PC-3 (cell line): ENCODE measurements at regions of chr1 and their contacts with region 1.

Region 1: DNA sequence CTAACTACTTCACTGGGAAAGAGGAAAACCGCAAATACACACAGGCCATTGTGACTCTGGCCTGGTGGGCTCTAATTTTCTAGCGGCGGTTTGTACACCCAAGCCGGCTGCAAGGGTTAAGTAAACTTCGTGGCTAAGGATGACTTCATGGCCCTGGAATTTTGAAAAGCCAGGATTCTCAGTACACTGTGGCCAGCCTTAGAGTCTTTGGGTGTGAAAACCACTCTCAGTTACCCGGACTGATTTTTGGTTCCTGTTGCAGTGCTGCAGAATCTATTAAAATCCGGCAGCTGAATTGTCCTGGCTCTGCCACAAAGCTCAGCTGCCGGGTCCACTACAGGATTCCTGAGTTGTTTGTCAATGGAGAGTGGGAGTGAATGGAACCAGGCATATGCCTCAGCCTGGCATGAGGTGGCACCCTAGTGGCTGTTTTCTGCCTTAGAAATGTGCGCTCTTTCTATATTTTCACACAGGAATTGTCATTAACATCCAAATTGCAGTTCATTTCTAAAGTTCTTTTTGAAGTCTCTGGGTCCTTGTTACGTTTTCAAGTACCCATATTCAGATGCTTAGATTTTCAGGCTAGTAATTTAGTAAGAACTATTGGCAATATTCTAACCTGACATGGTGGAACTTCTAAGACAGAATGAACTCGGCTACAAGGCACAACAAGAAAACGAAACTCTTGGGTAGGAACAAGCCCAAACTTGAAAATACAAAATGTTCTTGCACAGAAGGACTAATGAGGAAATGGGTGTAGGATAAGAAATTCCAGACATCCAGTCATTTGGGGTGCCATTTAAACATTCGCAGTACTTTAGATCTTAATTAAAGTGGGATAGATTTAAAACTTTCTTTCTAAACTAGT is 255.9 kb downstream of the NFIA start:
- DNase-seq: peak; percentile 96
- ATAC-seq: peak; percentile 96
- H3K4me3 ChIP-seq: peak overlapping the region; percentile 66
- H3K27ac ChIP-seq: peak overlapping the region; percentile 67
- H3K4me1 ChIP-seq: peaks cover 27% of the 10 kb centered on the region
- H3K27me3 ChIP-seq: no peaks in the 10 kb centered on the region
- CTCF ChIP-seq: peak; percentile 93

Region 2: GRCh38 chr1:60978421-60979357 is 359.5 kb before region 1 on chr1:
- CTCF ChIA-PET with region 1: interaction called, 5 read pairs
- POLR2A ChIA-PET with region 1: no interaction called
- intact Hi-C with region 1: loop called (anchors 1 kb)
- DNase-seq: peak; percentile 64
- ATAC-seq: peak; percentile 94
- H3K4me3 ChIP-seq: no peak overlapping the region
- H3K27ac ChIP-seq: no peak overlapping the region
- H3K4me1 ChIP-seq: no peaks in the 10 kb centered on the region
- H3K27me3 ChIP-seq: no peaks in the 10 kb centered on the region
- CTCF ChIP-seq: peak; percentile 93

Region 3: GRCh38 chr1:61132176-61133001 is 205.8 kb before region 1 on chr1:
- CTCF ChIA-PET with region 1: no interaction called
- POLR2A ChIA-PET with region 1: no interaction called
- intact Hi-C with region 1: loop called (anchors 1 kb)
- DNase-seq: no peak
- ATAC-seq: no peak; the same call in 1 of the 2 replicates
- H3K4me3 ChIP-seq: no peak overlapping the region
- H3K27ac ChIP-seq: peak overlapping the region; percentile 48
- H3K4me1 ChIP-seq: peaks cover 14% of the 10 kb centered on the region
- H3K27me3 ChIP-seq: no peaks in the 10 kb centered on the region
- CTCF ChIP-seq: no peak

Region 4: DNA sequence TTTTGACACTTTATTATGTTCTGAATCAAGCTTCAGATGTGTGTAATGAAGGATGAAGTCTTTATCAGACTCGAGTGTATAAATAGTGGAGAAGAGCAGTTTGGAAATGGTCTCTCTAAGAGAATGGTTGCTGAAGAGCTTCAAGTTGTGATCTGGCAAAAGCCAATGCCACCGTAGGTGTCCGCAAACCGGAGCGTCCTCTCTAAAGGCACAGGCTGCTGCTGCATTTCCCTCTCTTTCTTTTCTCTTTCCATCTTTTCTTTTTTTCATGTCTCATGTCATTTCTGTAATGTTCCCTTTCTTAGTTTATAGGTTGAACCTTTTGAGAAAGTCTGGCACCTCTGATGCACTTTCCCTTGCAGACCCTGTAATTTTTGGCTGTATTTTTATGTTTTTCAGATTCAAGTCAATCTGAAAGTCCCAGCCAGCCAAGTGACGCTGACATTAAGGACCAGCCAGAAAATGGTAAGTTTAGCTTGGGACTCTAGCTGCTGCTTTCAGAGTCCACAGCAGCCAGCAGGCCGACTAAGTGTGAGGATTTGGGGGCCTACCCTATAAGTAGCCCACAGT is 61.0 kb before region 1 on chr1:
- CTCF ChIA-PET with region 1: no interaction called
- POLR2A ChIA-PET with region 1: no interaction called
- intact Hi-C with region 1: no loop called
- DNase-seq: no peak
- ATAC-seq: no peak
- H3K4me3 ChIP-seq: no peak overlapping the region
- H3K27ac ChIP-seq: no peak overlapping the region
- H3K4me1 ChIP-seq: no peaks in the 10 kb centered on the region
- H3K27me3 ChIP-seq: no peaks in the 10 kb centered on the region
- CTCF ChIP-seq: no peak

Region 5: DNA sequence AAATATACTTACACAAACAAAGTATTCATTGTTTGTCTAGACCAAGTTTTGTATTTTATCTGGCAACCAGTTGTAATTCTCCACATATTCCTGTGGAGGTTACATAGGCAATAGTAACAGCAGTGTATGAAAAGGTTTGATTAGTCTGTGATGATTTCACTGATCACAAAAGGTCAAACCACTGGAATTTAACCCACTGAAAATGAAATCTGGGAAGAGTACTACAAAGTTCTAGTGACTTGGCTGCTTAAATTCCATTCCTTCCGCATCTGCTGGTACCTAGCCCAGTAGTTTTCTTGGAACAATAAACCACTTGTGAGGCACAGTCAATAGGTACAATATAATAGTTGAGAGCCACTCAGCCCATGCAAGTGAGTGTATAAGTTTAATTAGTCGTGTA is 50.5 kb before region 1 on chr1:
- CTCF ChIA-PET with region 1: no interaction called
- POLR2A ChIA-PET with region 1: no interaction called
- intact Hi-C with region 1: loop called (anchors 2 kb)
- DNase-seq: peak; percentile 95
- ATAC-seq: peak; percentile 84
- H3K4me3 ChIP-seq: no peak overlapping the region
- H3K27ac ChIP-seq: peak overlapping the region; percentile 90
- H3K4me1 ChIP-seq: peaks cover 37% of the 10 kb centered on the region
- H3K27me3 ChIP-seq: no peaks in the 10 kb centered on the region
- CTCF ChIP-seq: no peak

Region 6: DNA sequence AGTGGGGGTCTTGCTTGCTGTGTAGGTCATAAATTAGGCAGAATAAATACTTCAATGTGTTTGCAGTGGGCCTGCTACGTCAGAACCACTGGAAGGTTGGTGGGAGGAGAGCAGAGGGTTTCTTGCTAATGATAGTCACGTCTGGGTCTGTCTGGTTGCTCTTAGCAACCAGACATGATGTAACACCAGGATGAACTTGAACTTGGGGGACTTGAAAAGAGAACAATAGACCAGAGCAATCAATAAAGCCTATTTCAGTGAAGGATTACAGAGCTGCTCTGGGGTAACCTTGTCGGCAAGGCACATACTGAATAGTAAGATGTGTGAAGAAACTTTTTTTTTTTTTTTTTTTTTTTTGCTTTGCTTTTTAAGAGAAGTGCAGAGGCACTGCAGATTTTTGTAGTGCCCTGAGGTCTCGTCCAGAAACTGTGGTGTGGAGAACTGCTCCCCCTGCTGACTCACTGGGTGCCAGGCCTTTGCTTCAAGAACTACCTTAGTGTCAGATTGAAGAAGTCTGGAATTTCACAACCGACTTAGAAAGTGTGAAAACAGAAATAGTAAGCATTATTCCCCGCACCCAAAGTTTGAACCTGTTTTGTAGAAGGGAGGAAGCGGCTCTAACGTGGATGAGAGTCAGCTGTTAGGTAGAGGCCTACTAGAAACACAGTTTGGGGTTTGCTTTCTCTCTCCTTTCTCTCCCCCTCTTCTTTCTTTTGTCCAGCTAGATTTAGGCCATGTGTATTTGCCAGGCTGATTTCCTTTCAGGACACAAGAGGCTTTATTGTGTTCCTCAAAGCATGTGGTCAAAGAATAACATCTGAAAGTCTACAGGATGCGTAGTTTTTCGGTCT is 115.1 kb after region 1 on chr1:
- CTCF ChIA-PET with region 1: no interaction called
- POLR2A ChIA-PET with region 1: no interaction called
- intact Hi-C with region 1: loop called (anchors 1 kb)
- DNase-seq: peak; percentile 83
- ATAC-seq: peak; percentile 96
- H3K4me3 ChIP-seq: no peak overlapping the region
- H3K27ac ChIP-seq: no peak overlapping the region
- H3K4me1 ChIP-seq: peaks cover 35% of the 10 kb centered on the region
- H3K27me3 ChIP-seq: no peaks in the 10 kb centered on the region
- CTCF ChIP-seq: peak; percentile 86